Right ventricle myocardium superior (tissue), 1 donor: ENCODE measurements at regions of chr19 and their contacts with region 1.

Region 1: GRCh38 chr19:49097455-49098288 is 12.4 kb downstream of the SNRNP70 start:
- DNase-seq: peak; percentile 68
- ATAC-seq: peak; percentile 66

Region 2: DNA sequence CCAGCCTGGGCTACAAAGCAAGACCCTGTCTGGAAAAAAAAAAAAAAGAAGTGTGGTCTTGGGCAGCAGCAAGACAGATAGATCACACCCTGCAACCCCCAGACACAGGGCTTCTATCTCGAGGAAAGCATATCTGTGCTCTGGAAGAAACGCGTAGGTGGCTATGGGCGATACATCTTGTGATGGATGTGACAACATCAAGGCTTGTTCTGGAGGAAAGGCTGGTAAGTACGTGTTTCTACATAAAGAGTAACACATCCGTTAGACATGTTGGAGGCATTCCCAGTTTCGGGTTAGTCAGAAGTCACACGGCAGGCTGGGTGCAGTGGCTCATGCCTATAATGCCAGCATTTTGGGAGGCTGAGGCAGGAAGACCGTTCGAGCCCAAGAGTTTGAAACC is 170.8 kb before region 1 on chr19:
- intact Hi-C with region 1: no loop called
- DNase-seq: no peak
- ATAC-seq: peak; percentile 20

Region 3: GRCh38 chr19:49148784-49149651 is 51.3 kb after region 1 on chr19:
- intact Hi-C with region 1: loop called (anchors 5 kb)
- DNase-seq: peak; percentile 98
- ATAC-seq: peak; percentile 77

Region 4: GRCh38 chr19:49196527-49197240 is 99.0 kb after region 1 on chr19:
- intact Hi-C with region 1: loop called (anchors 5 kb)
- DNase-seq: peak; percentile 71
- ATAC-seq: peak; percentile 94

Region 5: GRCh38 chr19:49272184-49272583 is 174.5 kb after region 1 on chr19:
- intact Hi-C with region 1: no loop called
- DNase-seq: no peak
- ATAC-seq: no peak